Activated CD4-positive, alpha-beta T cell treated with anti-CD3 and anti-CD28 coated beads, Interleukin-2, amount 10 ng/mL, durations not matched to agents 24 days and 14 days (primary cell): ENCODE measurements at regions of chr1 and their contacts with region 1.

Region 1: GRCh38 chr1:44213222-44214112 is at the start of gene DMAP1:
- DNase-seq: peak; percentile 96
- H3K4me3 Mint-ChIP-seq: peak within 1 kb of the TSS; percentile 96
- H3K27ac Mint-ChIP-seq: peak within 1 kb of the TSS; percentile 90
- H3K4me1 Mint-ChIP-seq: peaks cover 29% of the 10 kb centered on the region
- H3K27me3 Mint-ChIP-seq: no peaks in the 10 kb centered on the region
- total RNA-seq, gene DMAP1: 34.1 and 36.0 TPM in 2 replicates

Region 2: GRCh38 chr1:44002606-44003157 is 210.8 kb before region 1 on chr1:
- intact Hi-C with region 1: loop called (anchors 10 kb)
- DNase-seq: no peak
- H3K4me3 Mint-ChIP-seq: no peak overlapping the region
- H3K27ac Mint-ChIP-seq: no peak overlapping the region
- H3K4me1 Mint-ChIP-seq: peaks cover 2% of the 10 kb centered on the region
- H3K27me3 Mint-ChIP-seq: no peaks in the 10 kb centered on the region

Region 3: GRCh38 chr1:44049839-44050238 is 163.6 kb before region 1 on chr1:
- intact Hi-C with region 1: no loop called
- DNase-seq: no peak
- H3K4me3 Mint-ChIP-seq: no peak overlapping the region
- H3K27ac Mint-ChIP-seq: no peak overlapping the region
- H3K4me1 Mint-ChIP-seq: peaks cover 19% of the 10 kb centered on the region
- H3K27me3 Mint-ChIP-seq: peaks cover 2% of the 10 kb centered on the region

Region 4: DNA sequence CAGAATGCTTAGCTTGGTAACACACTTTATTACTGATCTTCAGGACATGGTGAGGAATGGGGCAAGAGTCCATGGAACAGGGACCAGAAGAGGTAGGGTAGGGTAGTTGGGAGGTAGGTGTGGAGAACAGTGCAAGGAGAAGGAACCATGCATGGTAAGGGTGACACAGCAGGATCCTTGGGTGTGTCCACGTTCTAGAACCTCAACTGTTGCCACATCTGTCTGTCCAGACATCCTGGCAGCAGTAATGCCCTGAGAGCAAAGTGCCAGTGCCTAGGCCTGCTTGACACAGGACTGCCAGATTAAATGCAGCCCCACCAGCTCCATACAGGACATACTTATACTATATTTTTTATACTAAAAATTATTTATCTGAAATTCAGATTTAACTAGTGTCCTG is 13.7 kb after region 1 on chr1:
- intact Hi-C with region 1: no loop called
- DNase-seq: no peak
- H3K4me3 Mint-ChIP-seq: no peak overlapping the region
- H3K27ac Mint-ChIP-seq: no peak overlapping the region
- H3K4me1 Mint-ChIP-seq: no peaks in the 10 kb centered on the region
- H3K27me3 Mint-ChIP-seq: no peaks in the 10 kb centered on the region

Region 5: DNA sequence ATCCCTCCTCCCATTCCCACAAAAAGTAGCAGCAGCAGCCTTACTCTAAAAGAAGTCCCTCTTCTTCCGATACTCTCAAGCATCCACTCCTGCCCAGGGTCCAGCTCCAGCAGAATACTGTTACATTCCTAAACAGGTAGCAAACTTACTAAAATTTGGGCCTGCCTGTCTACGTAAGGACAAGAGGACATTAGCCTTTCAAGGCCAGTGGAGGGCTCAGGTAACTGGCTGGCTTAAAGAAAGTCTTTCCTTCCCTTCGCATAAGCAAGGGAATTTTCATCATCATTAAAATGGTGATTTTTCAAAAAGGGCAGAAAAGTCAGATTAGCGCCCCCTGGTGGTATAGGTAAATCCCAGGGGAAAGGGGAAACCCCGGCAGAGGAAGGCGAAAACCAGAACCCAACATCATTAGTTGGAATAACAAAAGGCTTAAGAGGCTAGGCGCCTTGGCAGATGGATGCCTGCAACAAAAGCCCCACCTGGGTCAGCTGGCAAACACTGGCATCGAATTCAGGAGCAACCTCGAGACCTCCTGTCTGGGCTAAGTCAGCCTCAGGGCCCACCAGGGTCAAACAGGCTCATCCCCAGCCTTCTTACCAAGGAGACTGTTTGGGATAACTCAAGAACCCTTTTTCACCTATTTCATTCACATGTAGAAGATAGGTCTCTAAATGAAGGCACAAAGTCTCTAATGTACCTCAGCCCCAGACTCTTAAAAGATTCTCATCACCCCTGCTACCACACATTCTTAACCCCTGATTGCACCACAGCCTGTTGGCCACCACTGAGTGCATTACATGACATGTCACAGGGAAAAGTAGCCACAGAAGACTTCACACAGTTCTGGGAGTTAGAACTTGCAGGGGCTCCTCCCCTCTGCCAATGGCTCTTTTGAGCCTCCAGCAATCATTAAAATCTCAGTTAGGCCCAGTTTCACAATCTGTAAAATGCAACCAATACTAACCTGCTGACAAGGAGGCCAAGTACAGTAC is 104.9 kb after region 1 on chr1:
- intact Hi-C with region 1: loop called (anchors 1 kb)
- DNase-seq: peak; percentile 85
- H3K4me3 Mint-ChIP-seq: no peak overlapping the region
- H3K27ac Mint-ChIP-seq: peak overlapping the region; percentile 20
- H3K4me1 Mint-ChIP-seq: peaks cover 23% of the 10 kb centered on the region
- H3K27me3 Mint-ChIP-seq: no peaks in the 10 kb centered on the region

Region 6: DNA sequence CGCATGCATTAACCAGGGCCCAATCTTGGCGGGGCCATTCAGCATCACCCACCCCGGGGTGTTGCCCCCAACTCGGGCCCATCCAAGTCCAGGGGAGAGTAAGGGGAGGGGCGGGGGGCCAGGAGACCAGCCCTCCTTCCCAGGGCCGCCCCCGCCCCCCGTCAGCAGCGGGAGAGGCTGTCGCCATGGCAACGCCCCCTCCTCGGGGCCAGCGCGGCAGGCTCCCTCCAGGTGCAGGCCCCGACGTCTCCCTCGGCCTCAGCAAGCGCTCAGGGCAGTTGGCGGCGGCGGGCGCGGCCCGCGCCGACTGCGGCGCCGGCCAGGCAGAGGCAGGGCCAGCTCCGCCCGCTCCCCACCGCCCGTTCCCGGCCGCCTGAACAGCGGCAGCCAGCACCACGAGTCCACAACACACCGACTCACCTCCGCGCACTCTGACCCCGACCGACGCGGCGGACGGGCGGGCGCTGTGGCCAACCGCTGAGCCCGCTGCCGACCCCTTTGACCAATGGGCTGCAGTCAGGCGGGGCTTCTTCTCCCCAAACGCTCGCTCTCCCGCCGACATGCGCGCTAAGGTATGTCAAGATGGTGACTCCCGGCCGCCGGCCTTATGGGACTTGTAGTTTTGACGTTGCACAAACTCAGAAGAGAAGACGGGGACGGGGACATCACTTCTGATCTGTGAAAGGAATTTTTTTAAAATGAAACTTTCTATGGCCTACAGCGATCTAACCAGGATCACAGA is 141.5 kb after region 1 on chr1 and contains the start of gene ERI3:
- intact Hi-C with region 1: loop called (anchors 1 kb)
- DNase-seq: peak; percentile 99
- H3K4me3 Mint-ChIP-seq: peak within 1 kb of the TSS; percentile 91
- H3K27ac Mint-ChIP-seq: peak within 1 kb of the TSS; percentile 91
- H3K4me1 Mint-ChIP-seq: peaks cover 28% of the 10 kb centered on the region
- H3K27me3 Mint-ChIP-seq: no peaks in the 10 kb centered on the region
- total RNA-seq, gene ERI3: 50.2 and 53.2 TPM in 2 replicates

Region 7: GRCh38 chr1:44594871-44595746 is 381.6 kb after region 1 on chr1:
- intact Hi-C with region 1: loop called (anchors 5 kb)
- DNase-seq: peak; percentile 92
- H3K4me3 Mint-ChIP-seq: no peak overlapping the region
- H3K27ac Mint-ChIP-seq: no peak overlapping the region
- H3K4me1 Mint-ChIP-seq: no peaks in the 10 kb centered on the region
- H3K27me3 Mint-ChIP-seq: no peaks in the 10 kb centered on the region

Region 8: GRCh38 chr1:44631647-44632539 is 418.4 kb after region 1 on chr1:
- intact Hi-C with region 1: loop called (anchors 5 kb)
- DNase-seq: peak; percentile 97
- H3K4me3 Mint-ChIP-seq: peak overlapping the region; percentile 89
- H3K27ac Mint-ChIP-seq: peak overlapping the region; percentile 98
- H3K4me1 Mint-ChIP-seq: peaks cover 32% of the 10 kb centered on the region
- H3K27me3 Mint-ChIP-seq: no peaks in the 10 kb centered on the region